GM10248 (cell line): ENCODE measurements at regions of chr14 and their contacts with region 1.

Region 1: DNA sequence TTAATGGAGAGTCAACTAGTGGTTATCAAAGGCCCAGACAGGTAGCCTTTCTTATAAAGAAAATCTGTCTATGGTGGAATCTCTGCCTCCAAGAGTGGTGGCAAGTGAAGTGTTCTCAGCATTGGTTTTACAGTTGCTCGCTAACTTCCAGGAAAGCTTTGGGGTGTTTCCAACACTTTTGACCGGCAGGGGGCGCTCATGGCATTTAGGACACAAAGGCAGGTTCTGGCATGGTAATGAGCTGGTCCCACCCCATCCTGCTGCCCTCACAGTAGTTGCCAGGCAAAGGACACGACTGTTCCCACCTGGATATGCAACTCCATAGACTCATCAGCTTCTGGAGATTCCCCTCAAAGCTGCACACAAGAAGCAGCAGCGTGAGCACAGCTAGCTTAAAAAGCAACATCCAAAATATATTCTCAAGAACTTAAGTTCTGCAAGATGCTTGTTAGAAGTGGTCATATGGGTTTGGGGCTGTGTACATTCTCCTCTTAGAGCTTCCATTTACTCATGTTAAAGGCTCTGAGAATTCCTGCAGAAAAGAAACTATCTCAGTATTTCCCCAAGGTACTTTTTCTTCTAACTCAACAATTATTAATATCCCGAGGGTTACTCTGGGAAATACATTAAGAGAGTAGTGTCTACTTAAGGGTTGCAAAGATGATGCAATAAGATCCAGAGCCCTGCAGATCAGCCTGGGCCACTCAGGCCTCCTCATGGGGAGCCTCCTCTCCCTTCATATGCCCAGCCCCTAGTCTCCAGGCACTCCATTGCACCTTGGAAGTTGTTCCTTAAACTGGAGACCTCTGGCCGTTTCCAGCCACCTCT is 14.8 kb downstream of the PROX2 start:
- DNase-seq: peak; percentile 81
- CTCF ChIP-seq: peak; percentile 86

Region 2: GRCh38 chr14:74841230-74842207 is 19.6 kb before region 1 on chr14:
- CTCF ChIA-PET with region 1: interaction called, 134 read pairs
- POLR2A ChIA-PET with region 1: no interaction called
- DNase-seq: peak; percentile 57
- CTCF ChIP-seq: no peak

Region 3: DNA sequence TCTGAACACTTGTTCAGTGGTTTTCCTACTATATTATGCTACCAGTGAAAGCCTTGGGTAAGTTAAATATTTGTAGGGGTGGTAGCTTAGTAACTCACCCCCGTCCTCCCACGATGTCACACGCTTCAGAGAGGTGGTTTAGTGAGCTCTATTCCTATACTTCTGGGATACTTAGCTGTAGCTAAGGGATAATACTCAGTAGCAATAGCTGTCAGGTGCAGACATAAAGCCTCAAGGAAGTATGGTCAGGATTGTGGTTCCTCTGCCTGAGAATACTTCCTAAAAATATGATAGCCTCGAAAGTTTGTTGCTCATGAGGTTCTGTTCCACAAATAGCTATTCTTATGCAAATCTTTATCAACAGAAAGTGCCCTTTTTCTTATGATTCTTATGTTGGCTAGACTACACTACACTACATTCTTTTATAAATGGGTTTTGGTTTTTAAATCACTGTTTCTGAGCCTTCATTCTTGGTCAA is 32.5 kb after region 1 on chr14:
- CTCF ChIA-PET with region 1: interaction called, 542 read pairs
- POLR2A ChIA-PET with region 1: interaction called, 4 read pairs
- DNase-seq: no peak
- CTCF ChIP-seq: no peak

Region 4: DNA sequence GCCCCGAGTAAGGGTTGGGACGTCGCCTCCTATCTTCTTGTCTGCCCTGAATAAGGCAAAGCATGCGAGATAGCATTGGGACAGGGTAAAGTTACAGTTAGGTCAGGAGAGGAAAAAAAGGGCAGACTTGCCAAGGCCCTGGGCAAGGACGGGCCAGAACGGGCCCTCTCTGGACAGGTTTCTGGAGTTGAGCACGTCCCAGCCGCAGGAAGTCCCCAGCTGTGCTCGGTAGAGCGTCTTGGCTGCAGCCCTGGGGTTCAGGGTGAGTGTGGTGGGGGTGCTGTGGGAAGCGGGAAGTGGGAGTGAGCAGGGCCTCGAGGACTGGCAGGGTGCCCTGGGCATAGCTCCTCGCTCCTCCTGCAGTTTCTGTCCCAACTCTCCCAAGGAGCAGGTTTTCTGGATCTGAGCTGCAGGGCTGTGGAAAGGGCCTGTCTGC is 56.5 kb after region 1 on chr14:
- CTCF ChIA-PET with region 1: interaction called, 542 read pairs
- POLR2A ChIA-PET with region 1: no interaction called
- DNase-seq: no peak
- CTCF ChIP-seq: no peak

Region 5: DNA sequence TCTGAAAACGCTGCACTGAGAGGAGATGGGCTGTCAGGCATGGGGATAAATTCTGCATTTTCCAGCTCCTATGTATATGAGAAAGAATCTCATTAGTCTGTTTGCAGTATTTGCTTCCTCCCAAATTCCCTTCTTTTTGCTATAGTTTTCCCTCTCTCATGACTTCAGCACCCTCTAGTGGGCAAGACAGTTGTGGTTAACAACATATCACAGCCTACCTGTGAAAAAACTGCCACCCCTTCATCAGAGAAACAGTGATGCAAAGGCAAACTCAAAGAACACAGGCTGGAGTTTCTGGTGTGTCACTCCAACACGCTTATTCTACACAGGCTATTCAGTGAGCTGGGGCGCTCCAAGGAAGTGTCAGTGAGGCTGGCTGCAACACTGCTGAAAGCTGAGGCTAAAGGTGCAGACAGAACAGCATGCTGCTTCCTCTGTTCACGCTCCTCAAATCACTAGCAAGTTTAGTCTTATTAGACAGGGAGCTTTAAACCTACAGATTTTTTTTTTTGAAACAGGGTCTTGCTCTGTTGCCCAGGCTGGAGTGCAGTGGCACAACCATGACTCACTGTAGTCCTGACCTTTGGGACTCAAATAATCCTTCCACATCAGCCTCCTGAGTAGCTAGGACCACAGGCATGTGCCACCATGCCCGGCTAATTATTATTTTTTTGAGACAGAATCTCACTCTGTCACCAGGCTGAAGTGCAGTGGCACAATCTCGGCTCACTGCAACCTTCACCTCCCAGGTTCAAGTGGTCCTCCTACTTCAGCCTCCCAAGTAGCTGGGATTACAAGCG is 227.7 kb after region 1 on chr14:
- CTCF ChIA-PET with region 1: interaction called, 72 read pairs
- POLR2A ChIA-PET with region 1: no interaction called
- DNase-seq: peak; percentile 49
- CTCF ChIP-seq: peak; percentile 56